ENCODE measurements at regions of chr3 and their contacts with region 1.

Region 1: GRCh38 chr3:152491922-152492321 is 223.2 kb downstream of the MBNL1 start:
- DNase-seq: no peak
- ATAC-seq: peak; percentile 93
- H3K4me3 ChIP-seq: no peak overlapping the region
- H3K27ac ChIP-seq: no peak overlapping the region
- H3K4me1 ChIP-seq: peaks cover 5% of the 10 kb centered on the region; the same call in 1 of the 2 replicates
- H3K27me3 ChIP-seq: no peaks in the 10 kb centered on the region
- CTCF ChIP-seq: no peak
- EP300 ChIP-seq: peak; percentile 69 to 83
- POLR2A ChIP-seq: no peak
- RAD21 ChIP-seq: no peak

Region 2: GRCh38 chr3:152416808-152417580 is 74.9 kb before region 1 on chr3:
- CTCF ChIA-PET with region 1: no interaction called
- POLR2A ChIA-PET with region 1: no interaction called
- RAD21 ChIA-PET with region 1: no interaction called
- SMC1A ChIA-PET with region 1: no interaction called
- in situ Hi-C with region 1: no loop called
- intact Hi-C with region 1: no loop called
- DNase-seq: no peak
- ATAC-seq: no peak
- H3K4me3 ChIP-seq: no peak overlapping the region
- H3K27ac ChIP-seq: no peak overlapping the region
- H3K4me1 ChIP-seq: no peaks in the 10 kb centered on the region; the same call in 1 of the 2 replicates
- H3K27me3 ChIP-seq: no peaks in the 10 kb centered on the region
- CTCF ChIP-seq: no peak
- EP300 ChIP-seq: no peak
- POLR2A ChIP-seq: no peak
- RAD21 ChIP-seq: no peak

Region 3: DNA sequence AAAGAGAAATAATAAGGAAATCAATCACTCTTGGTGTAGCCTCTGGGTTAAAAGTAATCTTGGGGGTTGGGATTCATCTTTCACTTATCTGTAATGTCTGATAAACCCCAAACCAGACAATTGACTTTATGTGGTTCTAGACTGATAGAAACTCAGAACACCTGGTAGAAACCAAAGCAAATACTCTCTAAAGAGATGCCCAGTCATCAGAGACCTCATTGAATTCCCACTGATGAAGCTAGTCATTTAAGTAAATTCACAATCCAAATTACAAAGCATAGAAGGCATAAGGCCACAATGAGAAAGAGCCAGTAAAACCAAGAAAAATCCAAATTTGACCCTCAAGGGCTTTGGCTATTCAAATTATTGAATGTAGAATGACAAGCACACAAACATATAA is 27.5 kb after region 1 on chr3:
- CTCF ChIA-PET with region 1: interaction called, 379 read pairs
- POLR2A ChIA-PET with region 1: interaction called, 6 read pairs
- RAD21 ChIA-PET with region 1: interaction called, 4 read pairs
- SMC1A ChIA-PET with region 1: interaction called, 28 read pairs
- in situ Hi-C with region 1: no loop called
- intact Hi-C with region 1: no loop called
- DNase-seq: no peak
- ATAC-seq: peak; percentile 72
- H3K4me3 ChIP-seq: no peak overlapping the region
- H3K27ac ChIP-seq: no peak overlapping the region
- H3K4me1 ChIP-seq: peaks cover 5% of the 10 kb centered on the region
- H3K27me3 ChIP-seq: no peaks in the 10 kb centered on the region
- CTCF ChIP-seq: no peak
- EP300 ChIP-seq: no peak; a peak in 1 of 4 replicates
- POLR2A ChIP-seq: no peak
- RAD21 ChIP-seq: no peak

Region 4: GRCh38 chr3:152564459-152564858 is 72.5 kb after region 1 on chr3:
- CTCF ChIA-PET with region 1: no interaction called
- POLR2A ChIA-PET with region 1: no interaction called
- RAD21 ChIA-PET with region 1: no interaction called
- SMC1A ChIA-PET with region 1: no interaction called
- in situ Hi-C with region 1: no loop called
- intact Hi-C with region 1: no loop called
- DNase-seq: no peak
- ATAC-seq: no peak
- H3K4me3 ChIP-seq: no peak overlapping the region
- H3K27ac ChIP-seq: no peak overlapping the region
- H3K4me1 ChIP-seq: no peaks in the 10 kb centered on the region
- H3K27me3 ChIP-seq: no peaks in the 10 kb centered on the region
- CTCF ChIP-seq: no peak
- EP300 ChIP-seq: no peak
- POLR2A ChIP-seq: no peak
- RAD21 ChIP-seq: no peak

Measured in GM12878 (cell line).